Ascending aorta (tissue), 2 donors: ENCODE measurements at regions of chr6 and their contacts with region 1.

Region 1: DNA sequence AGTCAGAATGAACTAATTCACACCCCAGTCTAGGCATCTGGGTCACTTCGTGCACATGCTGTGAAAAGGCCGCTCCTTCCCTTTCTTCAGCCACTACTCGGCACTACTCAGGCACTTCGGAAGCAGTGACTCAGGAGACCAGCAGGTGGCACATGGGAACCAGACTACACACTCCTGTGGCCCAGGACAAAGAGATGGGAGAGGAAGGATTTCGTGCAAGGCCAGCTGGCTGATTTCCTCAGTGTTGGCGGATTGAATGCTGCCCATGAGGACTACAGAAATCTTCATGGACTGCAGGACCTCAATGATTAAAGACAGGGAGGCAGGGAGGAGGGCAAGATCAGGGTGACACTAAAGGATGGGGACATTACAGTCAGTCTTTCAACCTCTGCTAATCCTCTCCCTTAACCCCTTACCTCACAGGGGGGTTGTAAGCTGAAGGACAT is 117.8 kb upstream of the SPACA1 start:
- DNase-seq: peak; percentile 37 to 91
- H3K4me3 ChIP-seq: no peak overlapping the region
- H3K27ac ChIP-seq: no peak overlapping the region
- H3K4me1 ChIP-seq: no peaks in the 10 kb centered on the region
- H3K27me3 ChIP-seq: no peaks in the 10 kb centered on the region
- CTCF ChIP-seq: peak; percentile 64 to 90 (median 79)

Region 2: DNA sequence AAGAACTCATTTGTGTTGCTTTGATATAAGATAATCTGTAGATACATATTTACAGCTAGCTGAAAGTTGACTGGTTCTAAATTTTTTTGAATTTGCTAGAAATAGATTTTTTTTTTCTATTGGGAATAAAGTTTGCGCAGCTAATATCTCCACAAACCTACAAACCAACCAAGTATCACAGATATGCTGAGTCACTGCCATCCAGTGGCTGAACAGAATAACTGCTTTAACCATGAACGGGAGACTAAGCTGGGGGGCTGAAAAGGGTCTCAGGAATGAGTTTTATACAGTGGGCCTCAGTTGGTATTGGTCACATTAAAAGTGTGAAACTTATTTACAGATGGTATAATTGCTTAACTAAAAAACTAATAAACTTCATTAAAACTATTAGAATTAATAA is 563.0 kb after region 1 on chr6:
- intact Hi-C with region 1: loop called (anchors 1 kb)
- DNase-seq: no peak
- H3K4me3 ChIP-seq: no peak overlapping the region
- H3K27ac ChIP-seq: no peak overlapping the region
- H3K4me1 ChIP-seq: no peaks in the 10 kb centered on the region
- H3K27me3 ChIP-seq: no peaks in the 10 kb centered on the region
- CTCF ChIP-seq: peak in 2 of 3 experiments; percentile 26 to 31

Region 3: GRCh38 chr6:88780714-88781389 is 851.0 kb after region 1 on chr6:
- intact Hi-C with region 1: loop called (anchors 2 kb)
- DNase-seq: no peak
- H3K4me3 ChIP-seq: no peak overlapping the region
- H3K27ac ChIP-seq: no peak overlapping the region
- H3K4me1 ChIP-seq: no peaks in the 10 kb centered on the region
- H3K27me3 ChIP-seq: no peaks in the 10 kb centered on the region
- CTCF ChIP-seq: peak; percentile 59 to 89 (median 75)

Region 4: DNA sequence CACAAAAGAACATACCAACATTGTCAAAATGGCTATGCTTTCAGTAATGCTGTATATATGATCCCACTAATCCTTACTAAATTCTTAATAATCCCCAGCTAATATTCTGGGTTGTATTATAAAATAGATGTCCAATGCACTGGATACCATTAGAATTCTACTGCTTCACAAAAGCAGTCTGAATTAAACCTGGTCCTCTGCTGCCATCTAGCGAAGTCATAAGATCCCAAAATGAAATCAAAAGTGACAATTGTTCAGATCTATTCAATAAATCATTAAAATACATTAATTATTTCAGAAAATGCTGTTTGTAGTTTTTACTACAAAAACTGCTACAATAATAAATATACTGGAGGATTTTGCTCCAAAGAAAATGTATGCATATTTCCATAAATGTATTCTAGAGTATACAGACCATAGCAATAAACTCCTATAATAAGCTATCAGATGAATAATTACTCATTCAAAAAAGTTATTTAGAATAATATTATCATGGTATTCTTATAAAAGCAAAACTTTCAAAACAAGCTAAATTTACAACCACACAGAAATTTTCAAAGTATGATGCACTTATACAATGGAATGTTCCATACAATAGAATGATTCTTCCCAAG is 941.0 kb after region 1 on chr6:
- intact Hi-C with region 1: loop called (anchors 1 kb)
- DNase-seq: no peak
- H3K4me3 ChIP-seq: no peak overlapping the region
- H3K27ac ChIP-seq: no peak overlapping the region
- H3K4me1 ChIP-seq: peaks cover 0 to 9% of the 10 kb centered on the region in 2 donors
- H3K27me3 ChIP-seq: no peaks in the 10 kb centered on the region
- CTCF ChIP-seq: peak; percentile 51 to 79 (median 64)